ENCODE measurements at regions of chr12 and their contacts with region 1.

Region 1: DNA sequence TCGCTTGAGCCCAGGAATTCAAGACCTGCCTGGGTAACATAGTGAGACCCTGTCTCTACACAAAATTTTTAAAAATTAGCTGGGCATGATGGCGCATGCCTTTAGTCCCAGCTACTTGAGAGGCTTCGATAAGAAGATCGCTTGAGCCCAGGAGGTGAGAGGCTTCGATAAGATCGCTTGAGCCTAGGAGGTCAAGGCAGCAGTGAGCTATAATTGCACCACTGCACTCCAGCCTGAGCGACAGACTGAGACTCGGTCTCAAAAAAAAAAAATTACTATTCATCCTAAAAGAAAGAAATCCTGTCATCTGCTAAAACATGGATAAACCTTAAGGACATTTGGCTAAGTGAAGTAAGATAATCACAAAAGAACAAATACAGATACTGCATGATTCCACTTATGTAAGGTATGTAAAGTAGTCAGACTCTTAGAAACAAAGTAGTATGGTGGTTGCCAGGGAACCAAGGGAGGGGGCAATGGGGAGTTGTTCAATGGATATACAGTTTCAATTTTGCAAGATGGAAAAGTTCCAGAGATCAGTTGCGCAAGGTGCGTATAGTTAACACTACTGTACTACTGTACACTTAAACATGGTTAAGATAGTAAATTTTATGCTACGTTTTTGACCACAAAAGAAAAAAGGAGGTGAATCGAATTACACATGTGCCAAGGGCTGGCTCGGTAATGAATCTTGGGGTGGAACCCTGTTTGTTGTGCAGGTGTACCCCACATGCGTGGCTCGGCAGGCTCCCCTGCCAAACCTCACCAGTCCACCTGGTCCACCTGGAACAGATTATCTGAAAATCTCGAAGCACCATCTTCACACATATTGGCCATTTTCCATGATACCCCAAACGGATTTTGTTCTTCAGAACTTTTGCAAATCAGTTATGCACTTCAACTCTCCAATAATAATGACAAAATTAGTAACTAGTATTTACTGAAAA is 18.3 kb upstream of the ATP2A2 start:
- DNase-seq: peak in 1 of 2 experiments; percentile 19
- H3K4me3 ChIP-seq: no peak overlapping the region
- H3K27ac ChIP-seq: no peak overlapping the region
- H3K4me1 ChIP-seq: no peaks in the 10 kb centered on the region
- H3K27me3 ChIP-seq: no peaks in the 10 kb centered on the region
- CTCF ChIP-seq: no peak

Region 2: DNA sequence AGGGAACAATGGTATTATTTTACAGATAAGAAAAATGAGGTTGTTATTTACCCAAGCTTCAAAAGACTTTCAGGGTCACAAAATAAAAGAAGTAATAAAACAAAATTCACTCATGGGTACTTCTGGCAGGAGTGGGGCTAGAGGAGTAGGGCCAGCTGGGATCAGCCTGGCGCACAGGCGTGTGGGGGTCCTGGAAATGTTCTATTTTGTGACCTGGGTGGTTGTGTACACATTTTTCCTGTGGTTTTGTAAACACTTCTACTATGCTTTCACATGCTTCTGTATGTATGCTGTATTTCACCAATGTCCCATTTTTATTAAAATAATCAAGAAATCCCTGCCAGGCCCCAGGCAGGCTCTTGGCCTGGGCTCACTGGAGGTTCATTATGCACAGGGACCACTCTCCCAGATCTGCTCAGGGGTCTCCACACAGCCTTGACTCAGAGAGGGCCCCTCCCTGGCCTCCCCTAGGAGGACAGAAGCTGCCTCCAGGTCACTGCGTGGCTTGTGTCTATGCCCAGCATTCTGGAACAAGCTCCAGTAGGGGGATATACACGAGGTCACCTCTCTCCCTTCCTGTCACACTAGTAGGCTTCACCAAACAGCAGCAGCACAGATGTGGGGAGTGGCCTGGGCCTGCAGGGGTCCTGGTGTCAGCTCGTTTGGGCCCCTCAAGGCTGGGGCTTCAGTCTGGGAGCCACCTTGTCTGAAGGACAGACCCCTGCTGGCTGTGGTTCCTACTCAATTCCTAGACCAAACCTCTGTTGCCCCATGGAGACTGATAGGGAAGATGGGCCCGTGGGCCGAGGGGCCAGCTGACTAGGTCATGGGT is 103.0 kb after region 1 on chr12:
- CTCF ChIA-PET with region 1: no interaction called
- POLR2A ChIA-PET with region 1: no interaction called
- intact Hi-C with region 1: no loop called
- DNase-seq: no peak
- H3K4me3 ChIP-seq: no peak overlapping the region
- H3K27ac ChIP-seq: no peak overlapping the region
- H3K4me1 ChIP-seq: no peaks in the 10 kb centered on the region
- H3K27me3 ChIP-seq: no peaks in the 10 kb centered on the region
- CTCF ChIP-seq: no peak

Region 3: DNA sequence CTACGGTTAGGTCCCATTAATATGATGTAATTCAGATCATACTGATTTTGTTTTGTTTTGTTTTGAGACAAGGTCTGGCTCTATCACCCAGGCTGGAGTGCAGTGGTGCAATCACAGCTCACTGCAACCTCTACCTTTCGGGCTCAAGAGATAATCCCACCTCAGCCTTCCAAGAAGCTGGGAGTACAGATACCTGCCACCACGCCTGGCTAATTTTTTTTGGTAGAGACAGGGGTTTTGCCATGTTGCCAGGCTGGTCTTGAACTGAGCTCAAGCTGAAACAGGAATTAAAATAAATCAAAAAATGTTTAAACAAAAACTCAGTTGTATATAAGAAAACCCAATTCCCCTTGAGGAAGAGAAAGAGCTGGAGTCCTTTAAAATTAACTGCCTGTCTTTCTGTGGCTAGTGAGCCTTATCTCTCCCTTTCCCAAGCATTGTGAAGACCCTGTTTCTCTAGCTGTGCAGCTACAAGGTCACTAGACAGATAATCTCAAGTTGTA is 158.5 kb after region 1 on chr12:
- CTCF ChIA-PET with region 1: interaction called, 12 read pairs
- POLR2A ChIA-PET with region 1: no interaction called
- intact Hi-C with region 1: no loop called
- DNase-seq: no peak
- H3K4me3 ChIP-seq: no peak overlapping the region
- H3K27ac ChIP-seq: no peak overlapping the region
- H3K4me1 ChIP-seq: no peaks in the 10 kb centered on the region
- H3K27me3 ChIP-seq: no peaks in the 10 kb centered on the region
- CTCF ChIP-seq: no peak

Region 4: GRCh38 chr12:110449799-110450497 is 187.2 kb after region 1 on chr12 and contains the start of gene ARPC3:
- CTCF ChIA-PET with region 1: no interaction called
- POLR2A ChIA-PET with region 1: no interaction called
- intact Hi-C with region 1: no loop called
- DNase-seq: peak; percentile 90 to 93
- H3K4me3 ChIP-seq: peak within 1 kb of the TSS; percentile 94
- H3K27ac ChIP-seq: peak within 1 kb of the TSS; percentile 61
- H3K4me1 ChIP-seq: 0 out of 2 replicates have a peak, but pooled peaks cover 4% of the 10 kb centered on the region
- H3K27me3 ChIP-seq: no peaks in the 10 kb centered on the region
- CTCF ChIP-seq: peak; percentile 77
- total RNA-seq, gene ARPC3: 167 and 229 TPM in 2 replicates